ENCODE measurements at regions of chr6 and their contacts with region 1.

Region 1: DNA sequence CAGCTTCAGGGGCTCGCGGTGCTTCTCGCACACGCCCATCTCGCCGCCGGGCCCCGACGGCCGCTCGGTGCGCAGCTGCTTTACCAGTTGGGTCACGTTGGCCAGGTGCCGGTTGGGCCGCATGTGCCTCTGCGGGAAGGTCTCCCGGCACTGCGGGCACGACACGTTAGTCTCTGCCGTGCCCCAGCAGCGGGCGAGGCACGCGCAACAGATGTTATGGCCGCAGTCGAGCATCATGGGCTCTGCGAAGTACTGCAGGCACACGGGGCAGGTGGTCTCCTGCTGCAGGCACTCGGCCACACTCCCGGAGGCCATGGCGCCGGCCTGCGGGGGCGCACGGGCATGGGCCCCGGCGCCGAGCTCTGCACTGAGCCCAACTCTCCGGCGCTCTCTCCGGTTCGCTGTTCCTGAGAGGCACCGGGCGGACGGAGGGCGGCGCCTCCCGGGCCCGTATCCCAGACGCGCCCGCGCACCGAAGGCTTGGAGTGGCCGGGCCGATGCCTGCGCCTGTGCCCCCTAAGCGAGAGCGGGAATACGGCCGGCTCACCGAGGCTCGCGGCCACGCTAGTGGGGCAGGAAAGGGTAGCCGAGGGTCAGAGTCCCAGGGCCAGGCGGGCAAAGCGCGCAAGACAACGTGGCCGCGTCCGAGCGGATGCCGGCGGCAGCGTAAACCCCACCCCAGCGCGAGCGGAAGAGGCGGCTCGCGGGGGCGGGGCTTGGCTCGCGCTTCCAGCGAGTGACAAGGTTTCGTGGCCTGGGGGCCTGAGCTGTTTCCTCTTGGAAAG is at the start of gene TRIM27:
- DNase-seq: peak; percentile 95
- H3K4me3 Mint-ChIP-seq: peak within 1 kb of the TSS; percentile 96
- H3K27ac Mint-ChIP-seq: peak within 1 kb of the TSS; percentile 98
- H3K4me1 Mint-ChIP-seq: peaks cover 27% of the 10 kb centered on the region
- H3K27me3 Mint-ChIP-seq: no peaks in the 10 kb centered on the region
- CTCF ChIP-seq: no peak
- total RNA-seq, gene TRIM27: 85.8 and 91.6 TPM in 2 replicates

Region 2: GRCh38 chr6:28895134-28895812 is 28.2 kb before region 1 on chr6:
- CTCF ChIA-PET with region 1: interaction called, 10 read pairs
- intact Hi-C with region 1: loop called (anchors 2 kb)
- DNase-seq: peak; percentile 90
- H3K4me3 Mint-ChIP-seq: peak overlapping the region; percentile 95
- H3K27ac Mint-ChIP-seq: peak overlapping the region; percentile 100
- H3K4me1 Mint-ChIP-seq: no peaks in the 10 kb centered on the region
- H3K27me3 Mint-ChIP-seq: no peaks in the 10 kb centered on the region
- CTCF ChIP-seq: no peak

Region 3: GRCh38 chr6:28981833-28982475 is 58.4 kb after region 1 on chr6:
- CTCF ChIA-PET with region 1: interaction called, 8 read pairs
- intact Hi-C with region 1: loop called (anchors 10 kb)
- DNase-seq: peak; percentile 81
- H3K4me3 Mint-ChIP-seq: peak overlapping the region; percentile 68
- H3K27ac Mint-ChIP-seq: peak overlapping the region; percentile 60
- H3K4me1 Mint-ChIP-seq: peaks cover 48% of the 10 kb centered on the region
- H3K27me3 Mint-ChIP-seq: no peaks in the 10 kb centered on the region
- CTCF ChIP-seq: no peak

Measured in Calu3 (cell line).